GM23248 (cell line): ENCODE measurements at regions of chr2 and their contacts with region 1.

Region 1: GRCh38 chr2:223800908-223801307 is 36.5 kb downstream of the AP1S3 start:
- DNase-seq: no peak
- H3K4me3 ChIP-seq: no peak overlapping the region
- H3K27ac ChIP-seq: no peak overlapping the region
- H3K4me1 ChIP-seq: peaks cover 19% of the 10 kb centered on the region
- H3K27me3 ChIP-seq: no peaks in the 10 kb centered on the region

Region 2: GRCh38 chr2:222976521-222977076 is 824.3 kb before region 1 on chr2:
- in situ Hi-C with region 1: loop called (anchors 10 kb)
- DNase-seq: no peak
- H3K4me3 ChIP-seq: no peak overlapping the region
- H3K27ac ChIP-seq: no peak overlapping the region
- H3K4me1 ChIP-seq: peaks cover 8% of the 10 kb centered on the region
- H3K27me3 ChIP-seq: no peaks in the 10 kb centered on the region

Region 3: GRCh38 chr2:223598994-223599639 is 201.8 kb before region 1 on chr2:
- in situ Hi-C with region 1: no loop called
- DNase-seq: peak; percentile 75
- H3K4me3 ChIP-seq: peak overlapping the region; percentile 47
- H3K27ac ChIP-seq: peak overlapping the region; percentile 66
- H3K4me1 ChIP-seq: peaks cover 37% of the 10 kb centered on the region
- H3K27me3 ChIP-seq: no peaks in the 10 kb centered on the region